Motor neuron (in vitro differentiated cells): ENCODE measurements at regions of chr15 and their contacts with region 1.

Region 1: GRCh38 chr15:22895469-22896190 is 57.2 kb downstream of the NIPA2 start:
- ATAC-seq: peak in 3 of 8 experiments; percentile 51 to 99 (median 98)
- H3K4me3 ChIP-seq: no peak overlapping the region
- H3K27ac ChIP-seq: no peak overlapping the region
- H3K4me1 ChIP-seq: no peaks in the 10 kb centered on the region

Region 2: GRCh38 chr15:22980189-22981050 is 84.8 kb after region 1 on chr15 and contains the start of gene CYFIP1:
- in situ Hi-C with region 1: loop called in 1 of 9 experiments (anchors 25 kb)
- ATAC-seq: peak; percentile 78 to 87 (median 80)
- H3K4me3 ChIP-seq: peak within 1 kb of the TSS; percentile 51 to 97 (median 64)
- H3K27ac ChIP-seq: no peak within 1 kb of the TSS
- H3K4me1 ChIP-seq: peaks cover 0 to 5% of the 10 kb centered on the region in 2 donors
- total RNA-seq, gene CYFIP1: 13.2 to 76.1 (median 31.8) TPM

Region 3: GRCh38 chr15:23397779-23398178 is 502.1 kb after region 1 on chr15:
- in situ Hi-C with region 1: no loop called
- ATAC-seq: no peak
- H3K4me3 ChIP-seq: no peak overlapping the region
- H3K27ac ChIP-seq: no peak overlapping the region
- H3K4me1 ChIP-seq: no peaks in the 10 kb centered on the region